PC-9 (cell line): ENCODE measurements at regions of chr7 and their contacts with region 1.

Region 1: GRCh38 chr7:126791306-126791705 is 461.4 kb downstream of the GRM8 start:
- DNase-seq: no peak
- H3K4me3 ChIP-seq: no peak overlapping the region
- H3K27ac ChIP-seq: no peak overlapping the region
- H3K4me1 ChIP-seq: no peaks in the 10 kb centered on the region
- H3K27me3 ChIP-seq: no peaks in the 10 kb centered on the region
- CTCF ChIP-seq: no peak

Region 2: DNA sequence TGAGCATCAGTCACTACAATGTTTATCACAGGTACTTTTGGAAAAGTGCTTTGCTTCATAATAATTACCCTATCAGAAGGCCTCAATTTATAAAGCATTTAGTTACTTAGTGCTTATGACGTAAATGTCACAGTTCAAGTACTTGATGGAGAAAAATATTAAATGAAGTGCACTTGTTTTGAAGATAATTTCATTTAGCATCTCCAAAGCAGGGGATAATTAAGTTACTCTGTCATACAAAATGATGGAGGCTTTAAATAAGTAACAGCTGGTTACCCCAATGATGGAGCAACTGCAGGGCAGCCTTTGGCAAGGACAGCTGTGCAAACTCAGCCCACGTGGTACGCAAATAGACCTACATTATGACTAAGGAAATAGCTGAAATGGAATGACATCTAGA is 307.3 kb before region 1 on chr7:
- CTCF ChIA-PET with region 1: no interaction called
- POLR2A ChIA-PET with region 1: interaction called, 20 read pairs
- intact Hi-C with region 1: no loop called
- DNase-seq: no peak
- H3K4me3 ChIP-seq: no peak overlapping the region
- H3K27ac ChIP-seq: no peak overlapping the region
- H3K4me1 ChIP-seq: no peaks in the 10 kb centered on the region
- H3K27me3 ChIP-seq: no peaks in the 10 kb centered on the region
- CTCF ChIP-seq: no peak

Region 3: DNA sequence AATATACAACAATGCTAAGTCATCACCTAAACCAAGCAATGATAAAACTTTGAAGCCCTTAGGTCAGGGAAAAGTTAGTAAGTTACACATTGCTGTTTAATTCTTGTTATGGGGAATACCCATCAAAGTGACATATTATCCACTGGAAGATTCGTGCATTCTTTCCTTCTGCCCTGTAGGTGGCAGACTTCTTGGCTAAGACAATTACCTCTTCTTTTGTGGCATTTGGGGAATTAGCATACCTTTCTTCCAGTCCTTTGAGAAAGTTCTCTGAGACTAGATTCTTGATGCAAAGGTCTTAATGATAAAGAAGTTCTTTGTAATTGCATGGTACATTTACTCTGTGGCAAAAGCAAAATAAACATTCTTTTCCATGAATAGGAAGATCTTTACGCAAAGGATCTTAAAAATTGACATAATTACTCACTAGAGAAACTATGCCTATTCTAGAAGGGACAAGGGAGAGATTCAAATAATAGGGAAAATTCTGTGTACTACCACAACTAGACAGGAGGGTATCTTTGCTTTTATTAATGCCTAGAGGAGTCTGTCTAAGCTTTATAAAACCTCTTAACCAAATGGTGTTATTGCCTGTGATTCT is 65.5 kb after region 1 on chr7:
- CTCF ChIA-PET with region 1: no interaction called
- POLR2A ChIA-PET with region 1: no interaction called
- intact Hi-C with region 1: no loop called
- DNase-seq: no peak
- H3K4me3 ChIP-seq: no peak overlapping the region
- H3K27ac ChIP-seq: no peak overlapping the region
- H3K4me1 ChIP-seq: no peaks in the 10 kb centered on the region
- H3K27me3 ChIP-seq: no peaks in the 10 kb centered on the region
- CTCF ChIP-seq: peak; percentile 64